ENCODE measurements at regions of chr4 and their contacts with region 1.

Region 1: DNA sequence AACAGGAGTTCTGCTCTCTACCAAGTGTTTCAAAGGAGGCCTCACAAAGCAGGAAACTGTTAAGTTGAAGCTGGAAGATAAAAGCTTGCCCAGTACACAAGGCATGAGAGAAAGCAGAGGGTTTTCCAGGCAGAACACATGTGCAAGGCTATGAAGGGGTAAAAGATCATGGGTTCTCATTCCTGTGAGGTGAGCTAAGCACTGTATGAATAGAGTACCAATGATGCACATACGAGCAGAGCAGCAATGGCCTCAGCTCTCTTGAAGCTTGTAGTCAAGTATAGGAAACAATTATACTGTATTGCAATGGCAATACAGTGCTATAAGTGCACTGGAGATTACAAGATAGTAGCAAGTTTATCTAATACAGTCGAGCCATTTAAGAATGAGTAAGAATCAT is 18.0 kb downstream of the TTC29 start:
- DNase-seq: no peak
- ATAC-seq: peak in 3 of 4 donors; percentile 29 to 62 (median 47)
- H3K4me3 ChIP-seq: no peak overlapping the region
- H3K27ac ChIP-seq: no peak overlapping the region
- H3K4me1 ChIP-seq: peaks cover 0 to 3% (median 0%) of the 10 kb centered on the region in 12 donors
- H3K27me3 ChIP-seq: peaks cover 0 to 7% (median 0%) of the 10 kb centered on the region in 9 donors
- CTCF ChIP-seq: no peak
- POLR2A ChIP-seq: no peak

Region 2: DNA sequence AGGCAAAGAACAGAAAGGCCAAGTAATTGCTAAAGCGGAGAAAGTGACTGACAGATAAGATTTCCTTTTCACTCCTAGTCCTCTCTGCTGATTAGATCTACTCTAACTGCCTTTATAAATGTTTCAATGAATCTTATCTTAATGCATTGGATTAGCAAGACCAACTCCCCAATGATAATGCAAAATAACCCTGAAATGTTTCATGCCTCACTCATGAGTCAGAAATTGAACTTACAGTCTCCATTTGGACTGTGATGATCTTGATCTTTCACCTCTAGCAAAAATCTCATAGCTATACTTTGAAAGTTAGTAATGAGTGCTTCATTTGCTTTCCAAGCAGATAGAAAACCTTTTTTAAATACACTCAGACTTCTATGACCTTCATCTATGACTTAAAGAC is 432.4 kb before region 1 on chr4:
- intact Hi-C with region 1: no loop called
- DNase-seq: no peak
- ATAC-seq: no peak
- H3K4me3 ChIP-seq: no peak overlapping the region
- H3K27ac ChIP-seq: no peak overlapping the region
- H3K4me1 ChIP-seq: no peaks in the 10 kb centered on the region
- H3K27me3 ChIP-seq: no peaks in the 10 kb centered on the region
- CTCF ChIP-seq: no peak
- POLR2A ChIP-seq: no peak

Region 3: DNA sequence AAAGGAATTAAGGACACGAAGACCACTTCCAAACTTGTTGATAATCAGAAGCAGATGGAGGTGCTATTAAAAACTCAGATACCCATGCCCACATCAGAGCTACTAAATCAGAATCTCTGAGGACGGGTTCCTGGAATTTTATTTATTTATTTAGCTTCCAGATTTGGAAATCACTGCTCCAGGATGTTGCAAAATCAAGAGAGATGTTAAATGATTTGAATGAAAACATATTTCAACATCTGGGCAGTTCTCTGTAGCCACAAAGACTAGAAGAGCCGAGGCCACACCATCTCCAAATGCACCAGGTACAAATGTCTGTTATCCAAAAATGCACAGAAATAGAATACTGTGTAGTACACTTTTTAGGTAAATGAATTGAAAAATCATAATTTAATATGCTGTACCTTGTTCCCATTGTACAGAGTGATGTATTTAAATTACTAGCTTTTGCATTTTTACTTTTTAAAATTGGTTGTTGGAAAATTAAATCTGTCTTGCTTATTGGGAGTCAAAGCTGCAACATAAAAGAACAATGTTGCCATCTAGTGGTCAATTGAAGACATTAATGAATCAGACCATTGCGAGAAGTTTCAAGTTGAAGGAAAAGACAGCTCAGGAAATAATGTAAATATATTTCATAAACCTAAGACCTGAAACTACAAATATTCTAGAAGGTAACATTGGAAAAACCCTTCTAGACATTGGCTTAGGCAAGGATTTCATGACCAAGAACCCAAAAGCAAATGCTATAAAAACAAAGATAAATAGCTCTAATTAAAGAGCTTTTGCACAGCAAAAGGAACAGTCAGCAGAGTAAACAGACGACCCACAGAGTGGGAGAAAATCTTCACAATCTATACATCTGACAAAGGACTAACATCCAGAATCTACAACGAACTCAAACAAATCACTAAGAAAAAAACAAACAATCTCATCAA is 169.2 kb after region 1 on chr4:
- intact Hi-C with region 1: loop called in 1 of 10 experiments (anchors 10 kb)
- DNase-seq: no peak
- ATAC-seq: peak in 1 of 4 donors; percentile 49
- H3K4me3 ChIP-seq: no peak overlapping the region
- H3K27ac ChIP-seq: no peak overlapping the region
- H3K4me1 ChIP-seq: no peaks in the 10 kb centered on the region
- H3K27me3 ChIP-seq: no peaks in the 10 kb centered on the region
- CTCF ChIP-seq: peak; percentile 49 to 79 (median 68)
- POLR2A ChIP-seq: no peak

Measured in heart left ventricle (tissue), 16 donors.